ENCODE measurements at regions of chr10 and their contacts with region 1.

Region 1: GRCh38 chr10:63521416-63522276 is 445 bp downstream of the REEP3 start:
- DNase-seq: peak; percentile 15 to 85 (median 55)
- ATAC-seq: peak; percentile 72
- H3K4me3 ChIP-seq: peak overlapping the region; percentile 61 to 81
- H3K4me3 Mint-ChIP-seq: peak overlapping the region; percentile 82
- H3K27ac ChIP-seq: peak overlapping the region; percentile 63 to 79
- H3K27ac Mint-ChIP-seq: peak overlapping the region; percentile 88
- H3K4me1 ChIP-seq: peaks cover 29% of the 10 kb centered on the region
- H3K4me1 Mint-ChIP-seq: peaks cover 67% of the 10 kb centered on the region
- H3K27me3 ChIP-seq: no peaks in the 10 kb centered on the region
- H3K27me3 Mint-ChIP-seq: no peaks in the 10 kb centered on the region
- CTCF ChIP-seq: no peak

Region 2: GRCh38 chr10:63133056-63133820 is 388.4 kb before region 1 on chr10 and contains the start of gene NRBF2:
- CTCF ChIA-PET with region 1: no interaction called
- POLR2A ChIA-PET with region 1: interaction called, 5 read pairs
- intact Hi-C with region 1: loop called in 1 of 2 experiments (anchors 1 kb)
- DNase-seq: peak; percentile 94 to 99 (median 97)
- ATAC-seq: peak; percentile 91
- H3K4me3 ChIP-seq: peak within 1 kb of the TSS; percentile 96 to 97
- H3K4me3 Mint-ChIP-seq: peak within 1 kb of the TSS; percentile 91
- H3K27ac ChIP-seq: peak within 1 kb of the TSS; percentile 96 to 98
- H3K27ac Mint-ChIP-seq: peak within 1 kb of the TSS; percentile 97
- H3K4me1 ChIP-seq: peaks cover 41% of the 10 kb centered on the region
- H3K4me1 Mint-ChIP-seq: peaks cover 37% of the 10 kb centered on the region
- H3K27me3 ChIP-seq: no peaks in the 10 kb centered on the region
- H3K27me3 Mint-ChIP-seq: peaks cover 5% of the 10 kb centered on the region
- CTCF ChIP-seq: peak; percentile 22
- total RNA-seq, gene NRBF2: 26.6 to 29.1 TPM

Region 3: GRCh38 chr10:63217120-63217605 is 304.5 kb before region 1 on chr10:
- CTCF ChIA-PET with region 1: interaction called, 5 read pairs
- POLR2A ChIA-PET with region 1: no interaction called
- intact Hi-C with region 1: loop called in 1 of 2 experiments (anchors 5 kb)
- DNase-seq: peak in 3 of 9 experiments; percentile 20 to 77 (median 62)
- ATAC-seq: peak; percentile 86
- H3K4me3 ChIP-seq: no peak overlapping the region
- H3K4me3 Mint-ChIP-seq: no peak overlapping the region
- H3K27ac ChIP-seq: no peak overlapping the region
- H3K27ac Mint-ChIP-seq: no peak overlapping the region
- H3K4me1 ChIP-seq: peaks cover 9% of the 10 kb centered on the region
- H3K4me1 Mint-ChIP-seq: peaks cover 52% of the 10 kb centered on the region
- H3K27me3 ChIP-seq: no peaks in the 10 kb centered on the region
- H3K27me3 Mint-ChIP-seq: no peaks in the 10 kb centered on the region
- CTCF ChIP-seq: peak; percentile 93

Region 4: DNA sequence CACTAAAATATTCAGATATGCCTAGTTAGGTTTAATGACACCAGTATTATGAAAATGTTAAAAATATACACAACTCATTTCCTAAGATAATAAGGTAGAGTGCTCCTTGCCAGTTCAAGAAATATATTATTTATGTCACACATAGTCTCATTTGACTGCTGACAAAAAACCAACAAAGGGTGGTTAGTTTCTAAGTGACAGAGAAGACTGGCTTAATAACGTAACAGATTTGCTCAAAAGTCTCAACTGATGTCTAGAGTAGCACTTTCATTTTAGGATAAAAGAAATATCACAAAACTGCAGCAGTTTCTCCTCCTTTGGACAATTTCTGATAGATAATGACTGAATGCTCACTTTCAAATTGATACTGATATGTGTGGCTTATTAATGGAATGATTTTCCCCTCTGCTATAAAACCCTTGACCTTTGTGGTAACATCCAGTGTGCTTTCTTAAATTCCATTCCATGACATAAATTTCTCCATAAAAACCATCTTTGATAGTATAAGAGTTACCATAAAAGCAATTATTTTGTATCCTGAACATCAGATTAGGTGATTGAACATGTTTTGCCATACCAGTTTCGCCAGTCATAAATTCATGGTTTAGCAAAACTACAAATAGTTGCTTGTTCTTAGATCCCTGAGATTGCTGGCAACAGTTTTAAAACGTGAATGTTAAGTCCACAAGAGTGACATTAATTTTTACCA is 294.3 kb before region 1 on chr10:
- CTCF ChIA-PET with region 1: no interaction called
- POLR2A ChIA-PET with region 1: no interaction called
- intact Hi-C with region 1: loop called in 1 of 2 experiments (anchors 5 kb)
- DNase-seq: peak in 2 of 9 experiments; percentile 30 to 59
- ATAC-seq: peak; percentile 36
- H3K4me3 ChIP-seq: no peak overlapping the region
- H3K4me3 Mint-ChIP-seq: peak overlapping the region; percentile 61
- H3K27ac ChIP-seq: peak overlapping the region in 1 of 2 experiments; percentile 49
- H3K27ac Mint-ChIP-seq: peak overlapping the region; percentile 88
- H3K4me1 ChIP-seq: peaks cover 42% of the 10 kb centered on the region
- H3K4me1 Mint-ChIP-seq: peaks cover 72% of the 10 kb centered on the region
- H3K27me3 ChIP-seq: no peaks in the 10 kb centered on the region
- H3K27me3 Mint-ChIP-seq: no peaks in the 10 kb centered on the region
- CTCF ChIP-seq: no peak

Region 5: DNA sequence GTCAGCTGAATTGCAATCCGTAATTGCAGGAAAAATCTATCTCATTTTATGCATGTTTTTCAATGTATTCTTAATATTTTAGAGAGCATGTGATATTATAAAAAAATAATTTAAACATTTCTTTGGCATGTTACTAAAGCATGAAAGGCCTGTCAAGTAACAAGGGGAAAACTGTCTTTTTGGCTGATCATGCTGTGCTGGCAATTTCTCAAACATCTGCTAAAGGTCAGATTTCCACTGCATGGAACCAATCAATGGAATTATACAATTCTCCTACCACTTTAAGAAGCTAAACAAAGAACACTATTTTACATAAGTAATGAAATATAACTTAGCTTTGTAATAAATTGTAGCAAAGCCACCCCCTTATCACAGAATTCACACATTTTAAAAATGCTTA is 105.3 kb before region 1 on chr10:
- CTCF ChIA-PET with region 1: no interaction called
- POLR2A ChIA-PET with region 1: interaction called, 3 read pairs
- intact Hi-C with region 1: loop called in 1 of 2 experiments (anchors 1 kb)
- DNase-seq: no peak
- ATAC-seq: no peak
- H3K4me3 ChIP-seq: no peak overlapping the region
- H3K4me3 Mint-ChIP-seq: no peak overlapping the region
- H3K27ac ChIP-seq: no peak overlapping the region
- H3K27ac Mint-ChIP-seq: no peak overlapping the region
- H3K4me1 ChIP-seq: peaks cover 13% of the 10 kb centered on the region
- H3K4me1 Mint-ChIP-seq: peaks cover 52% of the 10 kb centered on the region
- H3K27me3 ChIP-seq: no peaks in the 10 kb centered on the region
- H3K27me3 Mint-ChIP-seq: no peaks in the 10 kb centered on the region
- CTCF ChIP-seq: no peak

Region 6: DNA sequence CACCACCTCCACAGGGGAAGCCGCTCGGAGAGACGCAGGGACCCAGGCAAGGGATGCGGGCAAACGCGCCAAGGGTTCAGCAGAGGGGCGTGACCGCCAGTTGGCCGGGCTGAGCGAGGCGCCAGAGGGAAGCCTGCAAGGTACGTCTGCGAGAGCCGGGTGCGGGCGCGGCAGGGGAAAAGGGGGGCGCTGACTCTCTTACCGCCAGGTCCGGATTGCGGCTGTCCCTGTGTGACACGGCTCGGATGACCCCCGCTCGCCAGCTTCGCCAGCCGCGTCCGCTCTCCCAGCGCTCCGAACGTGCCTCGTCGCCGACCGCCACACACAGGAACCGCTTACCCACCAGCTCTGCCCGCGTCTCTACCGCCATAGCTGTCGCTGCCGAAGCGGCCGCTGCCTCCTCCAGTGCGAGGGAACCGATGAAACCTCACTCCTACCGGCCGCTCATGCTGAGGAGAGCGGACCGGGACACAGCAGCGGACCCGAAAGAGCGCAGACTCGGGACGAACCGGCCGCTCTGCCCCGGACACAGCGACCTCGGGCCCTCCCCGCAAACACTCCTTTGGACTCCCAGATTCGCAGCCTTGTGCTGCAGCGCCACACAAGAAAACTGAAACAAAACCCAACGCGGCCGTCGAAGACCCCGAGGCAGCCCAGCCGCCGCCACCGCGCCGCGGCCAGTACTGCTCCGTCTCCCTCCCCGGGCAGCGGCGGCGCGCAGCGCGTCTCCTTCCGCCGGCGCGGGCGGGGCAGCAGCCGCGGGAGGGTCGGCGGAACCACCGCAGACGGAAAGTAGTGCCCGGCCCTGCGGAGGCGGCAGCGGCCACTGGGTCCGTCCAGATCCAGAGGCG is 56.1 kb before region 1 on chr10 and contains the start of gene JMJD1C:
- CTCF ChIA-PET with region 1: no interaction called
- POLR2A ChIA-PET with region 1: interaction called, 14 read pairs
- intact Hi-C with region 1: loop called (anchors 2 to 5 kb)
- DNase-seq: peak; percentile 24 to 80 (median 59)
- ATAC-seq: peak; percentile 69
- H3K4me3 ChIP-seq: peak within 1 kb of the TSS; percentile 89 to 92
- H3K4me3 Mint-ChIP-seq: peak within 1 kb of the TSS; percentile 89
- H3K27ac ChIP-seq: peak within 1 kb of the TSS; percentile 65 to 79
- H3K27ac Mint-ChIP-seq: peak within 1 kb of the TSS; percentile 91
- H3K4me1 ChIP-seq: peaks cover 8% of the 10 kb centered on the region
- H3K4me1 Mint-ChIP-seq: peaks cover 33% of the 10 kb centered on the region
- H3K27me3 ChIP-seq: no peaks in the 10 kb centered on the region
- H3K27me3 Mint-ChIP-seq: no peaks in the 10 kb centered on the region
- CTCF ChIP-seq: no peak
- total RNA-seq, gene JMJD1C: 377 to 392 TPM

Region 7: DNA sequence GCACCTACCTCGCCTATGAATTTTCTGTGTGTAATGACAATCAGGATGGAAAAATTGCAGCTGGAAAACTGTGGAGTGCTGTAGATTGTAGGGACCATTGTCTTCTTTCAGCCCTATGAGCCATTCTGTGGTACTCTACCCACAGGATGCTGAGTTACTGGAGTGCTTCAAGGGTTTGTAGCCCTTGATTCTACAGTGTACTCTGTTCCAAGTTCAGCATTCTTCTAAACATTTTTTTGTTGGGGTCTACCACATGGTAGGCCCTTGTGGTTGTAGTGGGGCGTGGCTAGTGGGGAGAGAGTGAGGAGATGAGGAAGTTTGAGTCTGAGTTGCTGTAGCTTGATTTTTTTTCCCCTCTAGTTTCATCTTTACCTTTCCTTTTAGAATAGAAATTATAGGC is 33.0 kb after region 1 on chr10:
- CTCF ChIA-PET with region 1: no interaction called
- POLR2A ChIA-PET with region 1: interaction called, 7 read pairs
- intact Hi-C with region 1: loop called (anchors 2 kb)
- DNase-seq: peak; percentile 35 to 89 (median 63)
- ATAC-seq: peak; percentile 100
- H3K4me3 ChIP-seq: no peak overlapping the region
- H3K4me3 Mint-ChIP-seq: no peak overlapping the region
- H3K27ac ChIP-seq: peak overlapping the region in 1 of 2 experiments; percentile 45
- H3K27ac Mint-ChIP-seq: peak overlapping the region; percentile 67
- H3K4me1 ChIP-seq: peaks cover 17% of the 10 kb centered on the region
- H3K4me1 Mint-ChIP-seq: peaks cover 24% of the 10 kb centered on the region
- H3K27me3 ChIP-seq: no peaks in the 10 kb centered on the region
- H3K27me3 Mint-ChIP-seq: no peaks in the 10 kb centered on the region
- CTCF ChIP-seq: no peak

Region 8: DNA sequence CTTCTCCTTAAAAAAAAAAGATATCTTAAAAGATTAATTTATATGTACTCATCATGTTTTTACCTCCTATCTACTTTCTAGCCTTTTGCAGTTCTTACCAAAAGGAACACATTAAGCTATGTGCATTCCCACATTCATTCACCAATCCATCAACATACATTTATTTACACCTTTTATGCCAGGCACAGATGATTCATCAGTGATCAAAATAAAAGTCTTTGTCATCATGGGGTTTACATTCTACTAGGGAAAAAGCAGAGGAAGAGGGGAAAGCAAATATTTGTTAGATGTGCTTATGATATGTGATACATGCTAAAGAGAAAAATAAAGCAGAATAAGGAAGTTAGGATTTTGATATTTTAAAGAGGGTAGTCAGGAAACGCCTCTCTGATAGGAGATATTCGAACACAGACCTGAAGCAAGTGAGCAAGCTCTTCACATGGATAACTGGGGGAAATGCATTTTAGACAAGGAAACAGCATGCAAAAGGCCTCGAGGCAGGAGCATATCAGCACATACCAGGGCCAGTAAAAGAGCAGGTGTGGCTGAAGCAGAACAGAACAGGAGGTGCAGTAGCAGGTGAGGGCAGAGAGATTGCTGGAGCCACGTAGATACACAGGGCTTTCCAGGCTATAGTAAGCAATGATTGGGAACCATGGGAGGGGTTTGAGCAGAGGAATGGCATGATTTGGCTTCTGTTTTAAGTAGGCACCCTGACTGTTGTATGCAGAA is 67.0 kb after region 1 on chr10:
- CTCF ChIA-PET with region 1: no interaction called
- POLR2A ChIA-PET with region 1: no interaction called
- intact Hi-C with region 1: no loop called
- DNase-seq: no peak
- ATAC-seq: no peak
- H3K4me3 ChIP-seq: no peak overlapping the region
- H3K4me3 Mint-ChIP-seq: no peak overlapping the region
- H3K27ac ChIP-seq: no peak overlapping the region
- H3K27ac Mint-ChIP-seq: no peak overlapping the region
- H3K4me1 ChIP-seq: no peaks in the 10 kb centered on the region
- H3K4me1 Mint-ChIP-seq: no peaks in the 10 kb centered on the region
- H3K27me3 ChIP-seq: no peaks in the 10 kb centered on the region
- H3K27me3 Mint-ChIP-seq: no peaks in the 10 kb centered on the region
- CTCF ChIP-seq: no peak

Region 9: DNA sequence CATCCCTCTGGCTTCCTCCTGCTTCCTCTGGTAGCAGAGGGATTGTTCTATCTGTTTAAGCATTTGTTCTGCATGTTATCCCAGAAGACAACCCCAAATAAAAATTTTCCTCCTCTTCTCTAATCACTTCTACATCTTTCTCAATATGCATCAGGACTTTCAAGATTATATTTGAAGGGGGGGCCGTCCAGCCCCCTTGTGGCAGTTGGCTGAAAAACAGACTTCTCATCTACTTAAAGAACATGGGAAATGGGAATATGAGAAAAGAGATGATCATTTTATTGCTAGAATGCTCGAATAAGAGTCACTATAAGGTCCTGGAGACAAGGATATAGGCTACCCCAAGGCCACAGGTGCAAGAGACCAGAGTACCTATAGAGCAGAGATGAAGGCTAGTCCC is 465.6 kb after region 1 on chr10:
- CTCF ChIA-PET with region 1: no interaction called
- POLR2A ChIA-PET with region 1: no interaction called
- intact Hi-C with region 1: no loop called
- DNase-seq: no peak
- ATAC-seq: no peak
- H3K4me3 ChIP-seq: no peak overlapping the region
- H3K4me3 Mint-ChIP-seq: no peak overlapping the region
- H3K27ac ChIP-seq: no peak overlapping the region
- H3K27ac Mint-ChIP-seq: no peak overlapping the region
- H3K4me1 ChIP-seq: no peaks in the 10 kb centered on the region
- H3K4me1 Mint-ChIP-seq: no peaks in the 10 kb centered on the region
- H3K27me3 ChIP-seq: no peaks in the 10 kb centered on the region
- H3K27me3 Mint-ChIP-seq: peaks cover 3% of the 10 kb centered on the region
- CTCF ChIP-seq: no peak

Measured in CD8-positive, alpha-beta T cell (primary cell).